GM13976 (cell line): ENCODE measurements at regions of chr5 and their contacts with region 1.

Region 1: GRCh38 chr5:148469501-148469935 is 85.8 kb downstream of the FBXO38 start:
- DNase-seq: no peak
- CTCF ChIP-seq: no peak

Region 2: DNA sequence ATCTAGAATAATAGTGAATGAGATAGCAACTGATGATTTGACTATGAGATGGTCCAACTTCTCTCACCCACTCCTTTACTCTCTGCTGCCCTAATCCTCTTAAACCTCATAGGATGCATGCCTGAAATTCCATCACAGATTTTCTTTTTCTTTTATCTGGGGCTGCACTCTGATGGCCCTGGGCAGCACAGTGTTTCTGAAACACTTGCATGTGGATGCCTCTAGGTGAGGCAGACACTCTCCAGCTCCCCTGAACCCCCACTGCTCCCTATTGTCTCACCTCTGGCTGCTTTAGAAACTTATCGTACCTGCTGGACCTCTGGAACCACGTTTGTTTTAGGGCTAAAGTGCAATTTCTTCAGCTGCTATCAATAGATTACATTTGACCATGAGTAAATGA is 117.3 kb after region 1 on chr5:
- in situ Hi-C with region 1: no loop called
- DNase-seq: no peak
- CTCF ChIP-seq: no peak

Region 3: GRCh38 chr5:148708854-148709253 is 239.3 kb after region 1 on chr5:
- in situ Hi-C with region 1: loop called (anchors 10 kb)
- DNase-seq: no peak
- CTCF ChIP-seq: no peak